IMR-90 (cell line): ENCODE measurements at regions of chr2 and their contacts with region 1.

Region 1: GRCh38 chr2:181841079-181841478 is 50.5 kb upstream of the ITPRID2 start:
- DNase-seq: no peak
- ATAC-seq: no peak
- H3K4me3 ChIP-seq: no peak overlapping the region
- H3K27ac ChIP-seq: no peak overlapping the region
- H3K4me1 ChIP-seq: no peaks in the 10 kb centered on the region
- H3K27me3 ChIP-seq: no peaks in the 10 kb centered on the region
- CTCF ChIP-seq: no peak
- POLR2A ChIP-seq: no peak
- RAD21 ChIP-seq: no peak

Region 2: GRCh38 chr2:181466661-181467576 is 374.2 kb before region 1 on chr2:
- CTCF ChIA-PET with region 1: no interaction called
- POLR2A ChIA-PET with region 1: no interaction called
- dilution Hi-C with region 1: no loop called
- in situ Hi-C with region 1: no loop called
- intact Hi-C with region 1: no loop called
- DNase-seq: peak; percentile 63
- ATAC-seq: peak; percentile 63; the same call in 1 of the 2 replicates
- H3K4me3 ChIP-seq: no peak overlapping the region
- H3K27ac ChIP-seq: no peak overlapping the region
- H3K4me1 ChIP-seq: no peaks in the 10 kb centered on the region
- H3K27me3 ChIP-seq: no peaks in the 10 kb centered on the region
- CTCF ChIP-seq: peak; percentile 75
- POLR2A ChIP-seq: no peak
- RAD21 ChIP-seq: peak; percentile 63

Region 3: DNA sequence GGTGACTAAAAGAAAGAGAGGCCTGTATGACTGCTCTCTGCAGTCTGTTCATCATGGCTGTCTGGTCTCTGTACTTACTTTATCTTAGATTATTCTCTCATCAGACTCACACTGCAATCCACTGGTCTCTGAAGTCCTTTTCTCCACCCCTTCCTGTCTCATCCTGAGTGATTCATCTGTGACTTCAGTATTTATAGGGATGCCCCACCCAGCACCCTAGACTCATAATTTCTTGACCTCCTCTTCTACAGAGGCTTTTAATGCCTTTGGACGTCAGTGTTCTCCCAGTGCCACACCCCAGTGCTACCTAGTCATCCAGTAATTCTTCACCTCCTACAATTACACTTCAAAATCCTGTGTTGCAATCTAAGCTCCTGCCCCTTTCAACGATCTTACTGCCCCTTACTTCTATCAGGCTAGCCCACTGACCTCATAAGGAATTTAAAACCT is 35.6 kb after region 1 on chr2:
- CTCF ChIA-PET with region 1: no interaction called
- POLR2A ChIA-PET with region 1: no interaction called
- dilution Hi-C with region 1: no loop called
- in situ Hi-C with region 1: no loop called
- intact Hi-C with region 1: loop called (anchors 2 kb)
- DNase-seq: peak; percentile 68
- ATAC-seq: peak; percentile 67
- H3K4me3 ChIP-seq: no peak overlapping the region
- H3K27ac ChIP-seq: no peak overlapping the region; the same call in 1 of the 2 replicates
- H3K4me1 ChIP-seq: no peaks in the 10 kb centered on the region
- H3K27me3 ChIP-seq: no peaks in the 10 kb centered on the region
- CTCF ChIP-seq: no peak
- POLR2A ChIP-seq: no peak
- RAD21 ChIP-seq: no peak